HEK293 (cell line): ENCODE measurements at regions of chr6 and their contacts with region 1.

Region 1: GRCh38 chr6:148144917-148145521 is 197.6 kb upstream of the SASH1 start:
- H3K4me3 ChIP-seq: no peak overlapping the region
- H3K27ac ChIP-seq: no peak overlapping the region
- H3K4me1 ChIP-seq: no peaks in the 10 kb centered on the region
- CTCF ChIP-seq: 0 out of 2 replicates have a peak, but pooled peaks have one; percentile 27

Region 2: DNA sequence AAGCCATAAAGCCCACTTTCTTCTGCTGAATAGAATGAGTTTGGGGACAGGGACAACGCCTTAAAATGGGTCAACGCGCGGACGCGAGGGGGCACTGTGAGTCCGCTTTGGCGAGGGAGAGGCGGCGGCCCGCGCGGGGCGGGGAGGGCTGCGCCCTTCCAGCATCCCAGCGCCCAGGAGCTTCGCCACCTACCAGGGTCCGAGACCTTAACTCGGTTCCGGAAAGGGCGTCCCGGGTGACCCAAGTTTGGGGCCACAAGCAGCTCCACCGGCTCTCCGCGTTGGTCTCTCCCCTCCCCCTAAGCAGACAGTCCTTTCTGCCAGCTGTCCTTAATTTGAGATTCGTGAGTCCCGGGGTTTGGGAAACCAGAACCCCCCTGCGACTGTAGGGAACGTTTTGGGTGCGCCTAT is 638.3 kb before region 1 on chr6:
- CTCF ChIA-PET with region 1: interaction called, 12 read pairs
- POLR2A ChIA-PET with region 1: no interaction called
- H3K4me3 ChIP-seq: peak overlapping the region; percentile 79
- H3K27ac ChIP-seq: no peak overlapping the region; the same call in 1 of the 2 replicates
- H3K4me1 ChIP-seq: peaks cover 11% of the 10 kb centered on the region
- CTCF ChIP-seq: peak; percentile 88

Region 3: GRCh38 chr6:147823936-147824335 is 321.1 kb before region 1 on chr6:
- CTCF ChIA-PET with region 1: no interaction called
- POLR2A ChIA-PET with region 1: no interaction called
- H3K4me3 ChIP-seq: no peak overlapping the region
- H3K27ac ChIP-seq: no peak overlapping the region
- H3K4me1 ChIP-seq: no peaks in the 10 kb centered on the region
- CTCF ChIP-seq: no peak

Region 4: GRCh38 chr6:148128014-148128730 is 16.8 kb before region 1 on chr6:
- CTCF ChIA-PET with region 1: interaction called, 13 read pairs
- POLR2A ChIA-PET with region 1: no interaction called
- H3K4me3 ChIP-seq: no peak overlapping the region
- H3K27ac ChIP-seq: no peak overlapping the region
- H3K4me1 ChIP-seq: no peaks in the 10 kb centered on the region
- CTCF ChIP-seq: no peak

Region 5: DNA sequence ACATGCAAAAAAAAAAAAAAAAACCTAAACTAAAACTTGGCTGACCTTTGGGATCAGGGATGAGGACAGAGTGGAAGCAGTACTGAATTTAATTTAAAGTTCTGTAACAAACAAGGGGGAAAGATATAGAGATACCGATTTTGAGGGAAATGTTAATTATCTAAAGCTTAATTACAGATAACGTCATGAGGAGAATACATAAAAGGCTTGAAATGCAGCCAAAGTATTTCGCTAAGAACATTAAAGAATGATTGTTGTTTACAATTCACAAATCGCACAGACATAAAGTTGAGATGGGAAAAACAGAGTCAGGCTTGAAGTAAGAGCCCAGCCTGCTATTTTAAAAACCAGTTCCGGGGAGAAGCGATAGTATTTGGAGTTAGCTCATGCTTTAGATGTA is 10.4 kb before region 1 on chr6:
- CTCF ChIA-PET with region 1: interaction called, 25 read pairs
- POLR2A ChIA-PET with region 1: no interaction called
- H3K4me3 ChIP-seq: no peak overlapping the region
- H3K27ac ChIP-seq: no peak overlapping the region
- H3K4me1 ChIP-seq: peaks cover 2% of the 10 kb centered on the region; the same call in 1 of the 2 replicates
- CTCF ChIP-seq: no peak

Region 6: GRCh38 chr6:148157542-148158240 is 12.7 kb after region 1 on chr6:
- CTCF ChIA-PET with region 1: interaction called, 16 read pairs
- POLR2A ChIA-PET with region 1: no interaction called
- H3K4me3 ChIP-seq: no peak overlapping the region
- H3K27ac ChIP-seq: no peak overlapping the region
- H3K4me1 ChIP-seq: no peaks in the 10 kb centered on the region
- CTCF ChIP-seq: no peak

Region 7: GRCh38 chr6:148166339-148166968 is 21.4 kb after region 1 on chr6:
- CTCF ChIA-PET with region 1: interaction called, 21 read pairs
- POLR2A ChIA-PET with region 1: no interaction called
- H3K4me3 ChIP-seq: no peak overlapping the region
- H3K27ac ChIP-seq: no peak overlapping the region
- H3K4me1 ChIP-seq: no peaks in the 10 kb centered on the region
- CTCF ChIP-seq: peak; percentile 47

Region 8: DNA sequence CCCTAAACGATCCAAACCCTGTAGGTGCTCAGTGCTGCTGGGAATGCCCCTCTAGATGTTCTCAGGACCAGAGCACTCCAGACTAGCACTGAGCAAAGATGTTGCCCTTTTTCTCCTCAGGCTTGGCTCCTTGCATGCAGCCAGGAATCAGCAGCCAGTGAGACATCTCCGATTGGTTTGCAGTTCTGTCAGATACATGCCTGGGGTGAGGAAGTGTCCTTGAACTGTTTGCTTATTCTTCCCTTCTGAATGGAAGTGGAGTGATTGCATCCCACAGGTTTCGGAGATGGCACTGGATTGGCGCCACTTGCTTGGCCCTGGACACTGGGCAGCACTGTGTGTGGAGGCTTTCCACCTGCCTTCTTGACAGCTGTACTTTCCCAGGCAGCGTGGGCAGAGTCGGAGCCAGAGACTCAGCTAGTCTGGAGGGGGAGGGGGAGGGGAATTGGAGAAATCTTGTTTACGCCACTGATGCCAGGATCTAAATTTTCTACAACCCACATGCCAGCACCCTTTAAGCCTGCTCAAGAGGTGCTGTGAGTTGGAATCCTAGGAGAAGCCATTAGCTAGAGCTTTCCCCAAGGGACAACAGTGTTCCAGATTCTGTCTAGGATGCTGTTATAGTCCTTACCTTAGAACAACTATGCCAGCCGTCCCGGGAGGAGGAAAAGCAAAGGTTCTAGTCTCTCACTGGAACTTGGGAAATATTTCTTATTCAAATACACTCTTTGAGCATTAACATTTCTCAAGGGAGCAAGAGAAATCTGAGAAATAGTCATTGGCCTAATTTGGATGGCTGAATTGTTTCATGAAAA is 148.4 kb after region 1 on chr6:
- CTCF ChIA-PET with region 1: no interaction called
- POLR2A ChIA-PET with region 1: no interaction called
- H3K4me3 ChIP-seq: no peak overlapping the region
- H3K27ac ChIP-seq: no peak overlapping the region
- H3K4me1 ChIP-seq: no peaks in the 10 kb centered on the region; the same call in 1 of the 2 replicates
- CTCF ChIP-seq: no peak